A673 (cell line): ENCODE measurements at regions of chrX and their contacts with region 1.

Region 1: DNA sequence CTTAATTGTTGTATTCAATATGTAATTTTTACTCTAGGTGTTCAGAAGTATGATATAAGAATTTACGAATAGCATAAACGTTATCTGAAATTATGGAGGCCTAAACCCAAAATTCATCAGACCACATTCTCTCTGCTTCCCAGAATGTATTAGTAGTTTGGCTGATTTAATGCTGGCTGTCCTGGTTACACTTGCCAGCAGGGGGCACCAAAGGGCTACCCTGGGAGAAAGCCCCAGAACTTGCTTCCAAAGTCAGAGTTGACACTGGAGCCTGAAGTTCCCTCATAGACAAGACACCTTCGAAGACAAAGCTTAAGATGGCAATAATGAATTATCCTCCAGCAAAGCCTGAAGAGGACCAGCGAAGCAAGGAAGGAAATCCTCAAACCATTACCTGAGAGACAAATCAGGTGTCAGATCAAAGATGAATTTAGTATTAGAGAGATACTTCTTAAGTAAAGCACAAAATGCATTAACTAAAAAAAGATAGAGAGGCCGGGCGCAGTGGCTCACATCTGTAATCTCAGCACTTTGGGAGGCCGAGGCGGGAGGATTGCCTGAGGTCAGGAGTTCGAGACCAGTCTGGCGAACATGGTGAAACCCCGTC is 11.3 kb upstream of the ANOS1 start:
- DNase-seq: peak; percentile 64
- H3K4me3 ChIP-seq: no peak overlapping the region
- H3K27ac ChIP-seq: no peak overlapping the region
- H3K4me1 ChIP-seq: no peaks in the 10 kb centered on the region
- H3K27me3 ChIP-seq: no peaks in the 10 kb centered on the region
- CTCF ChIP-seq: peak; percentile 83

Region 2: GRCh38 chrX:7996414-7996813 is 746.8 kb before region 1 on chrX:
- CTCF ChIA-PET with region 1: no interaction called
- POLR2A ChIA-PET with region 1: no interaction called
- intact Hi-C with region 1: loop called (anchors 1 kb)
- DNase-seq: peak; percentile 50
- H3K4me3 ChIP-seq: no peak overlapping the region
- H3K27ac ChIP-seq: no peak overlapping the region
- H3K4me1 ChIP-seq: no peaks in the 10 kb centered on the region
- H3K27me3 ChIP-seq: no peaks in the 10 kb centered on the region
- CTCF ChIP-seq: peak; percentile 71

Region 3: GRCh38 chrX:8364369-8365141 is 378.7 kb before region 1 on chrX:
- CTCF ChIA-PET with region 1: interaction called, 6 read pairs
- POLR2A ChIA-PET with region 1: no interaction called
- intact Hi-C with region 1: loop called (anchors 2 kb)
- DNase-seq: peak; percentile 50
- H3K4me3 ChIP-seq: no peak overlapping the region
- H3K27ac ChIP-seq: no peak overlapping the region
- H3K4me1 ChIP-seq: no peaks in the 10 kb centered on the region
- H3K27me3 ChIP-seq: no peaks in the 10 kb centered on the region
- CTCF ChIP-seq: peak; percentile 63

Region 4: GRCh38 chrX:8447368-8447767 is 295.9 kb before region 1 on chrX:
- CTCF ChIA-PET with region 1: no interaction called
- POLR2A ChIA-PET with region 1: no interaction called
- intact Hi-C with region 1: loop called (anchors 10 kb)
- DNase-seq: no peak
- H3K4me3 ChIP-seq: no peak overlapping the region
- H3K27ac ChIP-seq: no peak overlapping the region
- H3K4me1 ChIP-seq: no peaks in the 10 kb centered on the region
- H3K27me3 ChIP-seq: no peaks in the 10 kb centered on the region
- CTCF ChIP-seq: no peak

Region 5: DNA sequence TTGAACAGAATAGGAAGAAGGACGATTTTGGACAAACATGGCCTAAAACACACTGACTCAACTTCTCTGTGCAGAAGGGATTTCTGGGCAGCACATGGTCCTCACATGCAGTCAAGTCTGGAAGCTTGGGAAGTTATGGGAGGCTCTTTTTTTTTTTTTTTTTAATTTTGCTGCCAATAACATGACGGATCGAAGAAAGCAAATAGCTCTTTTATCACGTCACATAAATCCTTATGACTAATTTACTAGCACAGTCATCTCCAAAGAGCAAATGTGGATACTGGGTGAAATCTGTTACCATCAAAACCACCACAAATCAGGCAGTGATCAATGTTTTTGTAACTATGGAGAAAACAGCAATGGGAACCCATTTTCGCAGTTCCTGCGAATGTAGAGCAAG is 484.0 kb after region 1 on chrX:
- CTCF ChIA-PET with region 1: no interaction called
- POLR2A ChIA-PET with region 1: no interaction called
- intact Hi-C with region 1: no loop called
- DNase-seq: no peak
- H3K4me3 ChIP-seq: no peak overlapping the region
- H3K27ac ChIP-seq: no peak overlapping the region
- H3K4me1 ChIP-seq: no peaks in the 10 kb centered on the region
- H3K27me3 ChIP-seq: no peaks in the 10 kb centered on the region
- CTCF ChIP-seq: no peak